Heart right ventricle (tissue), 16 donors: ENCODE measurements at regions of chr18 and their contacts with region 1.

Region 1: GRCh38 chr18:58671111-58671631 is at the start of gene MALT1:
- DNase-seq: peak; percentile 92 to 95
- ATAC-seq: peak; percentile 97 to 99 (median 98)
- H3K4me3 ChIP-seq: peak within 1 kb of the TSS; percentile 22 to 97 (median 76)
- H3K27ac ChIP-seq: peak within 1 kb of the TSS; percentile 88 to 99 (median 96)
- H3K4me1 ChIP-seq: peaks cover 0 to 42% (median 26%) of the 10 kb centered on the region in 9 donors
- H3K27me3 ChIP-seq: no peaks in the 10 kb centered on the region
- CTCF ChIP-seq: no peak
- total RNA-seq, gene MALT1: 8.1 to 20.0 (median 10.6) TPM

Region 2: DNA sequence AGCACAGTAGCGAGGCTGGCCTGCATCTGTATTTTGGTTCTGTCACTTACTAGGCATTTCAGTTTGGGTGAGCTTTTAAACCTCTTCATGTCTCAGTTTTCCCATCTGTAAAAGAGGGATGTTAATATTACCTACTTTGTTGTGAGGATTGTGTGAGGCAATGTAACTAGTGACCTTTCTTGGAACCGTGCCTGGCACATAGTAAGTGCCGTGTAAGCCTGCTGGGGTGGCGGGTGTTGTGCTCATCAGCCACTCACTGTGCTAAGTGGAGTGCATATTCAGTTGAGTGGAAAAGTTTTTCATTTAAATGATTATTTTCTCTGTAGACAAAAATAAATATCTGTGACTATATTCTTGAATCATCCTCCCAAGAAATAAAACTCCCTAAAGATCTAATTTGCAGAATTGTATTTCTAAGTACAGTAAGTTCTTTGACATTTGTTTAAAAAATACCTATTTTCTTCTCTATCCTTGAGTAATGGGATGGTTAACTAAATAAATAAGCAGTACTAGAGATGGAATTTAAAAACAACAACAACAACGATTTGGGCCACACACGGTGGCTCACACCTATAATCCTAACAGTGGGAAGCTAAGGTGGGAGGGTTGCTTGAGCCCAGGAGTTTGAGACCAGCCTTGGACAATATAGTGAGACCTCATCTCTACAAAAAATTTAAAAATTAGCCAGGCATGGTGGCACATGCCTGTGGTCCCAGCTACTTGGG is 56.8 kb after region 1 on chr18:
- intact Hi-C with region 1: loop called in 1 of 10 experiments (anchors 10 kb)
- DNase-seq: peak in 1 of 2 donors; percentile 28
- ATAC-seq: peak in 2 of 8 donors; percentile 71 to 76
- H3K4me3 ChIP-seq: no peak overlapping the region
- H3K27ac ChIP-seq: no peak overlapping the region
- H3K4me1 ChIP-seq: peaks cover 0 to 10% (median 0%) of the 10 kb centered on the region in 9 donors
- H3K27me3 ChIP-seq: no peaks in the 10 kb centered on the region
- CTCF ChIP-seq: no peak

Region 3: DNA sequence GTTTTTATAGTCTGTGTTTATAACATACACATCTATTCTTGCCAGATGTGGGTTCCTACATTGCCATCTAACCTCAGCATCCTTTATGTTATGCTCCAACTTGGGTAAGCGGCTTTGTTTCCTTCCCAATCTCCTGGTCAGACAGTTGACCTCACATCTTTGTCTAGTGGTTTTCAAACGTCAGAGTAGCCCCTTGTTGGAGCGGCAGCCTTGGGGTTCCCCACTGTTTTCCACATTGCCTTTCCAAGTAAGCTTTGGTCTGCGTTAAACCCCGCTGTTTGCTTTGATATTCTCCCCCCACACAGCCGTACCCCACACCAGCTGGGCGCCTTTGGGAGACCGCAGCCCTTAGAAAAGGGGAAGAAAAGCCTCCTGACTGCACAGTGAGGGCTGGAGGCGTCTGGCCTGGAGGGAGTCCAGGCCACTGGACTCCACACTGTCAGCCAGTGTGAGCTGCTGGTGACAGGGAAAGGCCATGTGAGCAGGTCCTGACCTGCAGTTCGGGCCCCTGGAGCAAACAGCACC is 83.4 kb after region 1 on chr18:
- intact Hi-C with region 1: loop called in 1 of 10 experiments (anchors 5 kb)
- DNase-seq: peak; percentile 36 to 43
- ATAC-seq: peak; percentile 81 to 90 (median 86)
- H3K4me3 ChIP-seq: no peak overlapping the region
- H3K27ac ChIP-seq: peak overlapping the region in 7 of 10 donors; percentile 2 to 65 (median 62)
- H3K4me1 ChIP-seq: peaks cover 0 to 21% (median 15%) of the 10 kb centered on the region in 9 donors
- H3K27me3 ChIP-seq: no peaks in the 10 kb centered on the region
- CTCF ChIP-seq: no peak

Region 4: GRCh38 chr18:58819051-58819450 is 147.9 kb after region 1 on chr18:
- intact Hi-C with region 1: no loop called
- DNase-seq: no peak
- ATAC-seq: no peak
- H3K4me3 ChIP-seq: no peak overlapping the region
- H3K27ac ChIP-seq: no peak overlapping the region
- H3K4me1 ChIP-seq: no peaks in the 10 kb centered on the region
- H3K27me3 ChIP-seq: no peaks in the 10 kb centered on the region
- CTCF ChIP-seq: no peak